Endothelial cell of umbilical vein (primary cell): ENCODE measurements at regions of chr12 and their contacts with region 1.

Region 1: GRCh38 chr12:71840231-71840847 is 780 bp downstream of the TBC1D15 start:
- DNase-seq: peak; percentile 92
- H3K4me3 ChIP-seq: peak overlapping the region; percentile 45 to 87 (median 71)
- H3K27ac ChIP-seq: peak overlapping the region; percentile 94
- H3K4me1 ChIP-seq: peaks cover 10% of the 10 kb centered on the region
- H3K27me3 ChIP-seq: no peaks in the 10 kb centered on the region
- CTCF ChIP-seq: no peak
- POLR2A ChIP-seq: no peak

Region 2: GRCh38 chr12:71354871-71355270 is 485.5 kb before region 1 on chr12:
- CTCF ChIA-PET with region 1: no interaction called
- POLR2A ChIA-PET with region 1: no interaction called
- dilution Hi-C with region 1: no loop called
- intact Hi-C with region 1: no loop called
- DNase-seq: no peak
- H3K4me3 ChIP-seq: no peak overlapping the region
- H3K27ac ChIP-seq: no peak overlapping the region
- H3K4me1 ChIP-seq: no peaks in the 10 kb centered on the region
- H3K27me3 ChIP-seq: no peaks in the 10 kb centered on the region
- CTCF ChIP-seq: no peak
- POLR2A ChIP-seq: no peak

Region 3: DNA sequence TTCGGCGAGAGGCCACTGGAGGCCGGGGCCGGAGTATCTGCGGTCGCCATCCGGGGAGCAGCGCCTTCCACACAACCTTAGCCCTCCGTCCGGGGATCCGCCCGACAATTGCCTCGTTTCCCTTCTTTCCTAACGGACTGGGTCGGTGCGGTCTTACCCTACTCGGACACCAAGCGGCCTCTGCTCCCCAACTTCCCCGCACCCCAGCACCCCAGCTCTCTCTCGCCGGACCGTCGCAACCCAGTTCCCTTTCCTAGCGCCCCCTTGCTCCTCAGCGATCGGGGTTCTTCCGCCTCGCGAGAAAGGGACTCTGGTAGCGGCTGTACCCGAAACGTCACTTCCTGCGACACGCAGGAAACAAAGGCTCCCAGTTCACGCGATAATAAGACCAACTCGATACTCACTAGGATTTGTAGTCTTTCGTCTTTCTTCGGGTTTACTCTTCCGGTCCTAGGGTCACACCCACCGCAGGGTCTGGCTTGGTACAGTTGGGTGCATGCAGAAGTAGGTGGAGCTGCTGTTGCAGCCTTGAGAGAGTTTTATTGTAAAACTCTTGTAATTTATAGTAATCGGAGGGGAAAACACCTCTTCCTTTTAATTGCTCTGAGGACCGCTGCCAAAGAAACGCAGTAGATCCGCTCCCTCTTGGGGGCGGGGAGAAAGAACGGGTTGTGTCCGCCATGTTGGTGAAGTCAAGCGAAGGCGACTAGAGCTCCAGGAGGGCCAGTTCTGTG is 176.6 kb before region 1 on chr12 and contains the start of gene ZFC3H1:
- CTCF ChIA-PET with region 1: interaction called, 3 read pairs
- POLR2A ChIA-PET with region 1: no interaction called
- dilution Hi-C with region 1: no loop called
- intact Hi-C with region 1: loop called (anchors 1 kb)
- DNase-seq: peak; percentile 99
- H3K4me3 ChIP-seq: peak within 1 kb of the TSS; percentile 81 to 98 (median 92)
- H3K27ac ChIP-seq: peak within 1 kb of the TSS; percentile 56
- H3K4me1 ChIP-seq: peaks cover 17% of the 10 kb centered on the region
- H3K27me3 ChIP-seq: no peaks in the 10 kb centered on the region
- CTCF ChIP-seq: peak in 1 of 2 donors; percentile 31
- POLR2A ChIP-seq: peak; percentile 73
- total RNA-seq, gene ZFC3H1: 47.6 and 60.4 TPM in 2 replicates

Region 4: GRCh38 chr12:71799106-71799505 is 41.2 kb before region 1 on chr12:
- CTCF ChIA-PET with region 1: no interaction called
- POLR2A ChIA-PET with region 1: no interaction called
- dilution Hi-C with region 1: no loop called
- intact Hi-C with region 1: loop called (anchors 1 kb)
- DNase-seq: peak; percentile 85
- H3K4me3 ChIP-seq: no peak overlapping the region
- H3K27ac ChIP-seq: peak overlapping the region; percentile 35
- H3K4me1 ChIP-seq: peaks cover 13% of the 10 kb centered on the region
- H3K27me3 ChIP-seq: no peaks in the 10 kb centered on the region
- CTCF ChIP-seq: no peak
- POLR2A ChIP-seq: no peak

Region 5: DNA sequence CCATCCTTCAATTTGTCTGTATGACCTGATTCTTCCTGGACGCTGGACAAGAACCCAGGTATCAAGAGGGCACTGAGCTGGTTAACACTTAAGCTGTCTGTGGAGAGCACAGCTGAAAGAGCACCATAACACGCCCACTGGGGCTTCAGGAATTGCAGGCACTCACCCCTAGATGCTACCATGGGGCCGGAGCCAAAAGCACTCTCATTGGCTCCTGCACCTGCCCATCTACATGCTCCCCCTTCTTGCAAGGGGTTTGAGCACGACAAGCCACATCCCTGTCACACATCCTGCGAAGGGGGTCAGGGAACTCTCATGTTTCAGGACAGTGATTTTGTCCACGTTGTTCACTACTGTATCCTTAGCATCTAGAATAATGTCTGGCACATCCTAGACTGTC is 35.8 kb before region 1 on chr12:
- CTCF ChIA-PET with region 1: no interaction called
- POLR2A ChIA-PET with region 1: no interaction called
- dilution Hi-C with region 1: no loop called
- intact Hi-C with region 1: loop called (anchors 1 kb)
- DNase-seq: no peak
- H3K4me3 ChIP-seq: no peak overlapping the region
- H3K27ac ChIP-seq: no peak overlapping the region
- H3K4me1 ChIP-seq: no peaks in the 10 kb centered on the region
- H3K27me3 ChIP-seq: peaks cover 0 to 3% of the 10 kb centered on the region in 2 experiments
- CTCF ChIP-seq: no peak
- POLR2A ChIP-seq: no peak

Region 6: DNA sequence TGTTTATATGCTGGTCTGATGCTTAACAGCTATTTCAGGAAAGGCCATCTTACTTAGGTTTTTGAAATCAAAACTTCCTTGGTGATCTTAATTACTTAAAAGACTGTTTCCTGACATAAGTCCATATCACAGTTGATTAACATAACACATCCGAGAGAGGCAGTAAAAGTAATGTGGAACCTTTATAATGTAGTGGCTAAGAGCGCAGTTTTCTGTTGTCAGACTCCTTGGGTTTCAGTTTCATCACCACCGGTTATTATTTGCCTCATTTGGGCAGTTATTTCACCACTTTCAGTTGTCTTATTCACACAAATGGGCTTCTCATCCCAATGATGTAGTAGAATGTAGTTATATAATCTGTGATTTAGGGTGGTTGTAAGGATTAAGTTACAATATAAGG is 30.1 kb after region 1 on chr12:
- CTCF ChIA-PET with region 1: no interaction called
- POLR2A ChIA-PET with region 1: no interaction called
- dilution Hi-C with region 1: no loop called
- intact Hi-C with region 1: no loop called
- DNase-seq: no peak
- H3K4me3 ChIP-seq: no peak overlapping the region
- H3K27ac ChIP-seq: no peak overlapping the region
- H3K4me1 ChIP-seq: peaks cover 3% of the 10 kb centered on the region
- H3K27me3 ChIP-seq: no peaks in the 10 kb centered on the region
- CTCF ChIP-seq: no peak
- POLR2A ChIP-seq: no peak

Region 7: DNA sequence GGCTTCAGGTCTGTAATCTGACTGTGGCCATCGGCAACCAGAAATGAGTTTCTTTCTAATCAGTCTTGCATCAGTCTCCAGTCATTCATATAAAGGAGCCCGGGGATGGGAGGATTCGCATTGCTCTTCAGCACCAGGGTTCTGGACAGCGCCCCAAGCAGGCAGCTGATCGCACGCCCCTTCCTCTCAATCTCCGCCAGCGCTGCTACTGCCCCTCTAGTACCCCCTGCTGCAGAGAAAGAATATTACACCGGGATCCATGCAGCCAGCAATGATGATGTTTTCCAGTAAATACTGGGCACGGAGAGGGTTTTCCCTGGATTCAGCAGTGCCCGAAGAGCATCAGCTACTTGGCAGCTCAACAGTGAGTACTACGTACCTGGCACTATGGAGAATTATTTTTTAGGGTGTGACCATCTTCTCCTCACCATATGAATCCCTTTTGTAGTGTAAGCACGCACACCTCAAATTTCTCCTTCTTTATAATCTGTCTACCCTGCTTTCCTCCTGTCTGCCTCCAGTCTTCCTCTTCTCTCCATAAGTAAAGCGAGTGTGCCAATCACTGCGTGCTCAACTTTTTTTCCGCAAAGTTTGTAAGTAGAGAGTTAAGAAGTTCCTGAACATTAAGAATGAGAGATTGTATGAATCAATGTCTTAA is 98.5 kb after region 1 on chr12 and contains the start of gene TPH2:
- CTCF ChIA-PET with region 1: interaction called, 4 read pairs
- POLR2A ChIA-PET with region 1: no interaction called
- dilution Hi-C with region 1: no loop called
- intact Hi-C with region 1: loop called (anchors 2 kb)
- DNase-seq: peak; percentile 83
- H3K4me3 ChIP-seq: no peak within 1 kb of the TSS
- H3K27ac ChIP-seq: no peak within 1 kb of the TSS
- H3K4me1 ChIP-seq: no peaks in the 10 kb centered on the region
- H3K27me3 ChIP-seq: peaks cover 2 to 6% of the 10 kb centered on the region in 2 experiments
- CTCF ChIP-seq: peak; percentile 71 to 77
- POLR2A ChIP-seq: no peak
- total RNA-seq, gene TPH2: not detected in 2 replicates